MCF 10A (cell line): ENCODE measurements at regions of chr6 and their contacts with region 1.

Region 1: DNA sequence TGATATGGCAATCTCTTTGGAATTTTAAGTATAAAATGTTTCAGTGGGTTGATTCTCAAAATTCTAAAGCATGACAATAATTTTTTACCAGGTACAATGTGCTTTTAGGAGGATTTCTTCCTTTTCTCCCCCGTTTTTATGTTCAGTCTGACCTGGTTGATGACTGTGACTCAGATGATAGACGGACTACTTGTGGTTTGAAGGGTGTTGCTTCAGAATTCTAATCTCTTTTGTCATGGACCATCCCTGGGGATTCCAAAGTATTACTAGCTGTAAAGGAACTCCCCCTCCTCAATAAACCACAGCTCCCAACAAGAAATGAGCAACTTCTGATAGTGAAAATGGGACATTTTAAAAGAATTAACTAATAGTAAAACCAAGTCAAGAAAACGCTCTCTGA is 34.9 kb upstream of the TNFAIP3 start:
- DNase-seq: peak; percentile 76
- H3K4me3 Mint-ChIP-seq: peak overlapping the region; percentile 33
- H3K27ac Mint-ChIP-seq: peak overlapping the region; percentile 90
- H3K4me1 Mint-ChIP-seq: peaks cover 54% of the 10 kb centered on the region
- H3K27me3 Mint-ChIP-seq: no peaks in the 10 kb centered on the region
- CTCF ChIP-seq: no peak

Region 2: GRCh38 chr6:137689377-137689776 is 142.7 kb before region 1 on chr6:
- CTCF ChIA-PET with region 1: no interaction called
- POLR2A ChIA-PET with region 1: no interaction called
- intact Hi-C with region 1: no loop called
- DNase-seq: no peak
- H3K4me3 Mint-ChIP-seq: no peak overlapping the region
- H3K27ac Mint-ChIP-seq: no peak overlapping the region
- H3K4me1 Mint-ChIP-seq: no peaks in the 10 kb centered on the region
- H3K27me3 Mint-ChIP-seq: no peaks in the 10 kb centered on the region
- CTCF ChIP-seq: no peak

Region 3: GRCh38 chr6:137811121-137811915 is 20.8 kb before region 1 on chr6:
- CTCF ChIA-PET with region 1: interaction called, 7 read pairs
- POLR2A ChIA-PET with region 1: interaction called, 49 read pairs
- intact Hi-C with region 1: loop called (anchors 2 kb)
- DNase-seq: peak; percentile 92
- H3K4me3 Mint-ChIP-seq: peak overlapping the region; percentile 58
- H3K27ac Mint-ChIP-seq: peak overlapping the region; percentile 94
- H3K4me1 Mint-ChIP-seq: peaks cover 55% of the 10 kb centered on the region
- H3K27me3 Mint-ChIP-seq: no peaks in the 10 kb centered on the region
- CTCF ChIP-seq: no peak

Region 4: GRCh38 chr6:137843211-137843610 is 11.1 kb after region 1 on chr6:
- CTCF ChIA-PET with region 1: no interaction called
- POLR2A ChIA-PET with region 1: interaction called, 11 read pairs
- intact Hi-C with region 1: no loop called
- DNase-seq: no peak
- H3K4me3 Mint-ChIP-seq: no peak overlapping the region
- H3K27ac Mint-ChIP-seq: no peak overlapping the region
- H3K4me1 Mint-ChIP-seq: peaks cover 7% of the 10 kb centered on the region
- H3K27me3 Mint-ChIP-seq: no peaks in the 10 kb centered on the region
- CTCF ChIP-seq: no peak

Region 5: DNA sequence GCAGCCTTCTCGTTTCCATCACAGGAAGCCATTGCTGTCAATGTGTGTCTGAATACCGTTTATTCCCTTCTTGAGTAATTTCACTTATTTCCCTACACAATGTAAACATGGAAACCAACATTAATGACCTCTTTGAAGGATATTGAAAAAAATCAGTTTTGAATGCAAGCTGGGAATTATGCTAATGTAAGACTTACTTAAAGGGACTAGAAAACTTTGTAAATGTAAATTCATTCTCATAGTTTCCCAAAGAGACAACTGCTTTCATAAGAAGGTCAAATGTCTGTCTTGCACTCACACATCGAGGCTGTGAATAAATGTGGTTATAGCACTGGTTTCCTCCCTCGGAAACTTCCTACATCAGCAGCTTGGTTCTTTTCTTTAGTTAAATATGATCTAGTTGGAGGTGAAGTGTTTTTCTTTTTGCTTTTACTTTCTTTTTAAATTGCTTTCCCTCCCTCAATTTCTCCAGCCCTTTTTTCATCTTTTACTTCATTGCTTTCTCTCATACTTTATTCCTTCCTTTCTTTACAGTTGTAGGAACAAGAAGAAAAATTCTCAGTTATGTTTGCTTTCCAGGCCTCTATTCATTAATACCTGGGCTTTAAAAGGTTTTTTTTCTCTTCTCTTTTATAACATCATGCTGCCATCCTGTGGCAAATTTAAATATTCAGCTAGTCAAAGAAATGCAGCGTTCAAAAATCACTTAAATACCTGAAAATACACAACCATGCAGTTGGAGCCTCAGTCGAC is 143.3 kb after region 1 on chr6:
- CTCF ChIA-PET with region 1: no interaction called
- POLR2A ChIA-PET with region 1: no interaction called
- intact Hi-C with region 1: no loop called
- DNase-seq: peak; percentile 29
- H3K4me3 Mint-ChIP-seq: no peak overlapping the region
- H3K27ac Mint-ChIP-seq: no peak overlapping the region
- H3K4me1 Mint-ChIP-seq: peaks cover 11% of the 10 kb centered on the region
- H3K27me3 Mint-ChIP-seq: no peaks in the 10 kb centered on the region
- CTCF ChIP-seq: peak; percentile 53

Region 6: DNA sequence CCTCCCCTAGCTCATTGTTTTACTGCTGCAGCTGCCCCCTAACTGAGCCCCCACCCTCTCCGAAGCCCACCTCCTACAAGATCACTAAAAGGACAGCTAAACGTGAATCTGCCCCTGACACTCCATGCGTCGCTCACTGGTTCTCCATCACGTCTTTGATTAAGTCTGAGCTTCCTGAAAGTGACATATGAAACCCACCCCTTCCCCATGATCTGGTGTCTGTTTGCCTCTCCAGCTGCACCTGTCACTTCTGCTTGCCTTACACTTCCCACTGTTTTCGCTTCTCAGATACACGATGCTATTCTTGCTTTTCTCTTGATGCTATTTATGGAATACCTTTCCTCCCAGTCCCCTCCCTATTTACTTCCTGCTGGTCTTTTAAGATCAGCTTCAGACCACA is 283.1 kb after region 1 on chr6:
- CTCF ChIA-PET with region 1: no interaction called
- POLR2A ChIA-PET with region 1: no interaction called
- intact Hi-C with region 1: no loop called
- DNase-seq: no peak
- H3K4me3 Mint-ChIP-seq: no peak overlapping the region
- H3K27ac Mint-ChIP-seq: no peak overlapping the region
- H3K4me1 Mint-ChIP-seq: no peaks in the 10 kb centered on the region
- H3K27me3 Mint-ChIP-seq: peaks cover 18% of the 10 kb centered on the region
- CTCF ChIP-seq: no peak

Region 7: GRCh38 chr6:138509371-138509770 is 677.3 kb after region 1 on chr6:
- CTCF ChIA-PET with region 1: no interaction called
- POLR2A ChIA-PET with region 1: no interaction called
- intact Hi-C with region 1: no loop called
- DNase-seq: peak; percentile 71
- H3K4me3 Mint-ChIP-seq: no peak overlapping the region
- H3K27ac Mint-ChIP-seq: no peak overlapping the region
- H3K4me1 Mint-ChIP-seq: peaks cover 18% of the 10 kb centered on the region
- H3K27me3 Mint-ChIP-seq: no peaks in the 10 kb centered on the region
- CTCF ChIP-seq: peak; percentile 33